Activated CD8-positive, alpha-beta T cell treated with anti-CD3 and anti-CD28 coated beads, Interleukin-2, amount 10 ng/mL, durations not matched to agents 7 days and 5 days (primary cell): ENCODE measurements at regions of chr22 and their contacts with region 1.

Region 1: GRCh38 chr22:32080904-32081303 is 37.8 kb downstream of the SLC5A1 start:
- DNase-seq: peak; percentile 38
- ATAC-seq: peak; percentile 55
- H3K4me3 Mint-ChIP-seq: no peak overlapping the region
- H3K27ac Mint-ChIP-seq: no peak overlapping the region
- H3K4me1 Mint-ChIP-seq: peaks cover 4% of the 10 kb centered on the region
- H3K27me3 Mint-ChIP-seq: peaks cover 18% of the 10 kb centered on the region

Region 2: DNA sequence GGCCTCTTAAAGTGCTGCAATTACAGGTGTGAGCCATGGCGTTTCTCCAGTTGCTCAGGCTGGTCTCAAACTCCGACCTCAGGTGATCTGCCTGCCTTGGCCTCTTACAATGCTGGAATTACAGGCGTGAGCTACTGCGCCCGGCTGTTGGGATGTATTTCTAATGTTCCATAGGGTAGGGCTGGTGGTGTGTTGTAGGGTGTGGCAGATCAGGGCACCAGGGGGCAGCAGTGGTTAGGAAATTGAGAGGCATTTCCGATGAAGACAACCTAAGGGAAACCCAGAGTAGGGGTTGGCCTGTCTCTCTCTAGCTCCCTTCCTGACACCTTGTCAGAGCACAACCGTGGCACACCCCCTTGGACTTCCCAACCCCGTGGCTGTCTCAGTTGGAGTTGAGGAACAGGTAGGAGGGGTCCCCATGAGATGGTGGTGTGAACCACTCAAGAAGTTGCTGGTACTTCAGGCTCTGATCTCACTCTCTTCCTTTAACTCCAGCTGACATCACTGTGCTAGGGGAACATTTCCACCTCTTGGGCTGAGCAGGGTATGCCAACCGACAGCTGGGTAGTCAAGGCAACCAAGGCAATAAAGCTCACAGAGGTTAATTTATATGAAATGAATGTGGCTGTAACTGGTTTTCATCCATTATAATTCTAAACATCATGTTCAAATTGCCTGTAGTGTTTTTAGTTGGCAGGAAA is 103.6 kb before region 1 on chr22:
- CTCF ChIA-PET with region 1: interaction called, 27 read pairs
- POLR2A ChIA-PET with region 1: no interaction called
- DNase-seq: peak; percentile 86
- ATAC-seq: peak; percentile 89
- H3K4me3 Mint-ChIP-seq: no peak overlapping the region
- H3K27ac Mint-ChIP-seq: no peak overlapping the region
- H3K4me1 Mint-ChIP-seq: peaks cover 3% of the 10 kb centered on the region
- H3K27me3 Mint-ChIP-seq: peaks cover 5% of the 10 kb centered on the region

Region 3: GRCh38 chr22:32100711-32101110 is 19.8 kb after region 1 on chr22:
- CTCF ChIA-PET with region 1: no interaction called
- POLR2A ChIA-PET with region 1: no interaction called
- DNase-seq: no peak
- ATAC-seq: no peak
- H3K4me3 Mint-ChIP-seq: no peak overlapping the region
- H3K27ac Mint-ChIP-seq: no peak overlapping the region
- H3K4me1 Mint-ChIP-seq: no peaks in the 10 kb centered on the region
- H3K27me3 Mint-ChIP-seq: peaks cover 30% of the 10 kb centered on the region